ENCODE measurements at regions of chr10 and their contacts with region 1.

Region 1: DNA sequence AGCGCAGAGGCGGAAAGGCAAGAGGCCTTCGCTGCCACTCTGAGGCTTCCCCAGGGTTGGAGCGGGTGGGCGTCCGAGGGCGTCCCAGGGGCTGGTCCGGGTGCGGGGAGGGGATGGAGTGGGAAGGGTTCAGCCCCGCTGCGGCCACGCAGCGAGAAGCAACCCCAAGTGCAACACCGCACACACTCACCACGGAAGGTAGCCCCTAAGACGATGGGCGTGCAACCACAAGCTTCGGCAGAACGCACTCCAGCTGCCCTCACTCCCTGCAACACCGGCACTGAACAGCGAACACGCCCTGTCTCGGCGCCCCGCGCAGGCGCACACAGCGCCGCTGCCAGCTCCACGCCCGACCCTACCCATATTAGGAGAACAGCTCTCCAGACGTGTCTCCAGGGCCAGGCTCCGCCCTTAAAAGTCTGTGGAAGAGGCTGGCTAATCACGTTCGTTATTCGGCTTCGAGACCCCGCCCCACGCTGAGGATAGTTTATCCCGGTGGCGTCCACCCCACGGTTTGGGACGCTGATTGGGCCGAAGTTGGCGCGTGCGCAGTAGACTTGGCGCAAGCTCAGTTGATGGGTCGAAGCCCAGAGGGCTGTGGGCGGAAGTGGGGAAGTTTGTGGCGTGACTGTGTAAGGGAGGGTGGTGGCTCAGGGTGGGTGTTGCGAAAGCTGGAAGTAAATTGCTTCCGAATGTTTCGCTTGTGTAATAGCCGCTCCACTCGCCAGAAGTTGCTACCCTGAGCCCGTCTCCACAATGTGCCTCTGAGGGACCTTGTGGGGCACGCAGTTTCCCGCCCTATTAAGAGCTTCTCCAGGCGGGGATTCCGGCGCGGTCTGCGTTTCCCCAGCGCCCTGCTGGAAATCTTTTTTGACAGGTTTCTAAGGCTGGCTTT is at the start of gene RSU1:
- DNase-seq: peak; percentile 100
- ATAC-seq: peak; percentile 99
- H3K4me3 Mint-ChIP-seq: peak within 1 kb of the TSS; percentile 87
- H3K27ac Mint-ChIP-seq: peak within 1 kb of the TSS; percentile 95
- H3K4me1 Mint-ChIP-seq: peaks cover 27% of the 10 kb centered on the region
- H3K27me3 Mint-ChIP-seq: no peaks in the 10 kb centered on the region
- total RNA-seq, gene RSU1: 38.4 to 62.8 TPM

Region 2: GRCh38 chr10:15859906-15860691 is 957.3 kb before region 1 on chr10 and contains the start of gene MINDY3:
- CTCF ChIA-PET with region 1: interaction called, 4 read pairs
- POLR2A ChIA-PET with region 1: no interaction called
- intact Hi-C with region 1: loop called in 1 of 2 experiments (anchors 1 kb)
- DNase-seq: peak; percentile 88
- ATAC-seq: peak; percentile 94
- H3K4me3 Mint-ChIP-seq: peak within 1 kb of the TSS; percentile 88
- H3K27ac Mint-ChIP-seq: peak within 1 kb of the TSS; percentile 93
- H3K4me1 Mint-ChIP-seq: peaks cover 32% of the 10 kb centered on the region
- H3K27me3 Mint-ChIP-seq: peaks cover 10% of the 10 kb centered on the region
- total RNA-seq, gene MINDY3: 11.5 to 12.8 TPM

Region 3: GRCh38 chr10:16787361-16787791 is 30.0 kb before region 1 on chr10:
- CTCF ChIA-PET with region 1: no interaction called
- POLR2A ChIA-PET with region 1: interaction called, 3 read pairs
- intact Hi-C with region 1: loop called (anchors 1 to 2 kb)
- DNase-seq: peak; percentile 77
- ATAC-seq: peak; percentile 95
- H3K4me3 Mint-ChIP-seq: peak overlapping the region; percentile 63
- H3K27ac Mint-ChIP-seq: peak overlapping the region; percentile 96
- H3K4me1 Mint-ChIP-seq: peaks cover 31% of the 10 kb centered on the region
- H3K27me3 Mint-ChIP-seq: no peaks in the 10 kb centered on the region

Region 4: DNA sequence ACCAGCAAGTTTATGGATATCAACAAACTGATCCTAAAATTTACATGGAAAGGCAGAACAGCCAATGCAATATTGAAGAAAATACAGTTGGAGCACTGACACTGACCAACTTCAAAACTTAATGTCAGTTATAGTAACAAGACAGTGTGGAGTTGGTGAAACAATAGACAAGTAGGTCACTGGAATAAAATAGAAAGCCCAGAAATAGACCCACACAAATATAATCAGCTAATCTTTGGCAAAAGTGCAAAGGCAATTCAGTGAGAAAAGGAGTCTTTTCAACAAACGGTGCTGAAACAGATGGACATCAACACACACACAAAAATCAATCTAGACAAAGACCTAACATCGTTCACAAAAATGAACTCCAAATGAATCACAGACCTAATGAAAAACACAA is 13.9 kb before region 1 on chr10:
- CTCF ChIA-PET with region 1: interaction called, 13 read pairs
- POLR2A ChIA-PET with region 1: no interaction called
- intact Hi-C with region 1: no loop called
- DNase-seq: no peak
- ATAC-seq: no peak
- H3K4me3 Mint-ChIP-seq: no peak overlapping the region
- H3K27ac Mint-ChIP-seq: no peak overlapping the region
- H3K4me1 Mint-ChIP-seq: peaks cover 31% of the 10 kb centered on the region
- H3K27me3 Mint-ChIP-seq: no peaks in the 10 kb centered on the region

Region 5: DNA sequence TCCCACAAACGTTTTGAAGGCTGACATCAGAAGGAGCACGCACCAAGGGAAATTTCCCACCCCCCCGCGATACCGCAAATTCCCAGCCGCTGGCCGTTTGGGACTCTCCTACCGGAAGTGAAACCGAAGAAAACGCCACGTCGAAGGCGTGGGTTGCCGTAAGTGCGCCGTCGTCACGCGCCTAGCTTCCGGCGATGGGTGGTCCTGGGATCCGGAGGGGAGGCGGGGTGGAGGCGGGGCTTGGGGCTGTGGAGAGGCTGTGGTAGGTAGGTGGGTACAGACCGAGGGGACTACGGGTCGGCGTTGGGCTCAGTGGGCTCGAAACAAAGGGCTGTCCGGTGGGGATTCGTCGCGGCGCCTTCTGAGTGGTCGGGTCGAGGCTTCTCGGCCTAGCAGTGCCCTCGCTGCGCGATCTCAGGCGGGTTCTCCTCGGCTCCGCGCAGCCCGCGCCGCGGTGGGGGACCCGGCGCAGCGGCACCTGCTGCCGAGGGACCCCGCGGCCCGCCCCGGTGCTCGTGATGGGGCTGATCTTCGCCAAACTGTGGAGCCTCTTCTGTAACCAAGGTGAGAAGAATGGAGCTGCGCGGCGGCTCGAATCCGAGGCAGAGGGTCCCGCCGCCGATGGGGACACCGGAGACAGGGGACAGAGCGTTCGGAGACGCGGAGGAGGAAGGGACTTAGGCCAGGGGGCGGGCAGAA is 1841.9 kb after region 1 on chr10 and contains the start of gene ARL5B:
- CTCF ChIA-PET with region 1: no interaction called
- POLR2A ChIA-PET with region 1: no interaction called
- intact Hi-C with region 1: loop called in 1 of 2 experiments (anchors 2 kb)
- DNase-seq: peak; percentile 98
- ATAC-seq: peak; percentile 95
- H3K4me3 Mint-ChIP-seq: peak within 1 kb of the TSS; percentile 99
- H3K27ac Mint-ChIP-seq: peak within 1 kb of the TSS; percentile 98
- H3K4me1 Mint-ChIP-seq: peaks cover 39% of the 10 kb centered on the region
- H3K27me3 Mint-ChIP-seq: no peaks in the 10 kb centered on the region
- total RNA-seq, gene ARL5B: 11.3 to 12.0 TPM